CD14-positive monocyte (primary cell): ENCODE measurements at regions of chr3 and their contacts with region 1.

Region 1: DNA sequence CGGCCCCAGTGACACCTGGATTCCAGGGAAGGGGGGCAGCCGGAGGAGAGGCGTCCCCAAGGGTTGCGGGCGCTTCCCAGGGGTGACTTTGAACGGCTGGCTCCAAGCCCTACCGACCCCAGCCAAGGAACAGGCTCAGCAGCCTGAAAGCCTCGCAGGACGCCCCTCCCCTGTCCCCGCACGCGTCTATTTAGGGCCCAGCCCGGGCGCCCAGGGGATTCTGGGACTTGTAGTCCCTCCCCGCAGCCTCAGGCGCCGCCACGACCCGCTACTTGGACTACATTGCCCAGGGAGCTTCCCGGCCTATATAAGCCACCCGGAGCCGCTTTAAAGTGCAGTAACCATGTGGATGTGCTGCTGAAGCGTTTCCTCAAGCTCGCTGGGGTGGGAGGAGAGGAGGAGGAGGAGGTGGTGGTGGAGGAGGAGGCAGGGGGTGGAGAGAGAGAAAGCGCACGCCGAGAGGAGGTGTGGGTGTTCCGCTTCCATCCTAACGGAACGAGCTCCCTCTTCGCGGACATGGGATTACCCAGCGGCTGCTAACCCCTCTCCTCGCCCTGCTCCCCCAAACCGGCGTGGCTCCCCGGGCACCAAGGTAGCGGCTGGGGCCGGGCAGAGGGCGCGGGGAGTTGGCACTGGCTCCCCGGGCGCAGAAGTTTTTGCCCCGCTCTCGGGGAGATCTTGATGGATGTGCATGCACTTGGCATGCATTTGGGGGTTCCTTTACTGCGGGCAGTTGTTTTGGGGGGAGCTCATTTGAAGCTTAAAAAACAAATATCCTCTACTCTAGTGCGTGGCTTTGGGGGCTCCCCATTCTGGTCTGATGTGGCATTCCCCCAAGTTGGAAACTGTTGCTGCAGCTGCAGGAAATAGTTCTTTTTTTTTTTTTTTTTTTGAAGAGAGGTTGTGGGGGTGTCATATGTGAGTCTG is at the start of gene ITPR1:
- DNase-seq: peak; percentile 97 to 98 (median 98)
- H3K4me3 ChIP-seq: peak within 1 kb of the TSS; percentile 47 to 94 (median 67)
- H3K4me3 Mint-ChIP-seq: peak within 1 kb of the TSS; percentile 93 to 96
- H3K27ac ChIP-seq: peak within 1 kb of the TSS; percentile 45 to 82
- H3K27ac Mint-ChIP-seq: peak within 1 kb of the TSS; percentile 80 to 92 (median 89)
- H3K4me1 ChIP-seq: peaks cover 37 to 51% of the 10 kb centered on the region in 2 donors
- H3K4me1 Mint-ChIP-seq: peaks cover 51% of the 10 kb centered on the region
- H3K27me3 ChIP-seq: peaks cover 0 to 4% of the 10 kb centered on the region in 2 donors
- H3K27me3 Mint-ChIP-seq: peaks cover 3 to 5% (median 5%) of the 10 kb centered on the region in 3 donors
- CTCF ChIP-seq: no peak
- polyA plus RNA-seq, gene ITPR1: 3.2 to 21.1 (median 7.1) TPM

Region 2: DNA sequence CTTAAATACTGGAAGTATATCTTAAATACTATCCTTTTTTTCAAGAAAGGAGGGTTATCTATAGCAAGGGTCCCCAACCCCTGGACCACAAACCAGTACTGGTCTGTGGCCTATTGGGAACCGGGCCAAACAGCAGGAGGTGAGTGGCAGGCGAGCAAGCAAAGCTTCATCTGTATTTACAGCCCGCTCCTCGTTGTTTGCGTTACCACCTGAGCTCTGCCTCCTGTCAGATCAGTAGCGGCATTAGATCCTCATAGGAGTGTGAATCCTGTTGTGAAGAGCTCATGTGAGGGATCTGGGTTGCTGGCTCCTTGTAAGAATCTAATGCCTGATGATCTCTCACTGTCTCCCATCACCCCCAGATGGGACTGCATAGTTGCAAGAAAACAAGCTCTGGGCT is 52.3 kb before region 1 on chr3:
- intact Hi-C with region 1: no loop called
- DNase-seq: no peak
- H3K4me3 ChIP-seq: no peak overlapping the region
- H3K4me3 Mint-ChIP-seq: no peak overlapping the region
- H3K27ac ChIP-seq: no peak overlapping the region
- H3K27ac Mint-ChIP-seq: peak overlapping the region in 1 of 7 donors; percentile 3
- H3K4me1 ChIP-seq: no peaks in the 10 kb centered on the region
- H3K4me1 Mint-ChIP-seq: peaks cover 2% of the 10 kb centered on the region
- H3K27me3 ChIP-seq: no peaks in the 10 kb centered on the region
- H3K27me3 Mint-ChIP-seq: no peaks in the 10 kb centered on the region
- CTCF ChIP-seq: no peak

Region 3: DNA sequence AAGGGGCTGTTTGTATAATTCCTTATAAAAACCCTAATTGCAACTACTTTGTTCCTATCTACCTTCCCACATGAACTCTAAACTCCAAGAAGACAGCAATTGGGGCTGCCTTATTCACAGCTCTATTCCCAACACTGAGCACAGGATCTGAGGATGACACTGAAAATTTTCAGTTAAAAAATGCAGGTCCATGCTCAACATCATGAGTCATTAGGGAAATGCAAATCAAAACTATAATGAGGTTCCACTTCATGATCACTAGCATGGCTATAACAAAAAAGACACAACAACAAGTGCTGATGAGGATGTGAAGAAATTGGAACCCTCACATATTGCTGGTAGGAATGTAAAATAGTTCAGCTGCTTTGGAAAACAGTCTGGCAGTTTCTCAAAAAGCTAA is 39.1 kb before region 1 on chr3:
- intact Hi-C with region 1: loop called in 1 of 2 experiments (anchors 5 kb)
- DNase-seq: no peak
- H3K4me3 ChIP-seq: no peak overlapping the region
- H3K4me3 Mint-ChIP-seq: no peak overlapping the region
- H3K27ac ChIP-seq: peak overlapping the region in 1 of 2 donors; percentile 47
- H3K27ac Mint-ChIP-seq: peak overlapping the region in 1 of 7 donors; percentile 65
- H3K4me1 ChIP-seq: peaks cover 6 to 10% of the 10 kb centered on the region in 2 donors
- H3K4me1 Mint-ChIP-seq: peaks cover 16% of the 10 kb centered on the region
- H3K27me3 ChIP-seq: no peaks in the 10 kb centered on the region
- H3K27me3 Mint-ChIP-seq: no peaks in the 10 kb centered on the region
- CTCF ChIP-seq: no peak

Region 4: DNA sequence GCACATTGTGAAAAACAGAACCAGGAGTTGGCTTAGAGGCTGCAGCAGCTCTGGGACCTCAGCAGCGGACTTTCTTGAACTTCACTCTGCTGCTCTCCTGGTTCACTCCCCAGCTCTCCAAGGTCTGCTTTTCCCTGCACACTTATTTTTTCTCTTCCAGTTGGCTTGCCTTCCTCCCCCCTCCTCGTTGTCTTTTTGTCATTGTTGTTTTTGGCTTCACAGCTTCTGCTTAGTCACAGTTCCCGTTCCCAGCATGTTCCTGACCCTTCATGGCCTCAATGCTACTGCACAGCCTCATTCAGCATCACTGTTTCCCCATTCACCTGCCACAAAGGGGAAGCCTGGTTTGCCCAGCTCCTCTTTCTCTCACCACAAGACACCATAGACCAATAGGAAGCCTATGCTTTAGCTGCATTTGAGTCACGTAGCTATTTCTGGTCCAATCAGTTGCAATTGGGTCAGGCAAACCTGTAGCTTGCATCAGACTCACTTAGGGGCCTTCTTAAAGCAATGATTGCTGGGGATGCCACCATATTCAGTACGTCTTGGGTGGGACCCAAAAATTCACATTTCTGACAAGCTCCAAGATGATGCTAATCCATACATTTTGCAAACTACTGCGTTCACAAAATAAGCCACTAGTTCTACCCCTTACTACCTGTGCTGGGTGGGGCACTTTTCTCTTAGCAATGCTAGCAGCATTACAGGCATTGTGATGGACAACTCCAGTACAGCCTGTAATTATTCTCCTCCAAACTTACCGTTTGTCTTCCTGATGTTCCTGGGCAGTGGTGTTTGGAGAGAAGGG is 18.4 kb before region 1 on chr3:
- intact Hi-C with region 1: loop called (anchors 2 kb)
- DNase-seq: peak; percentile 90 to 97 (median 95)
- H3K4me3 ChIP-seq: peak overlapping the region; percentile 28 to 59 (median 39)
- H3K4me3 Mint-ChIP-seq: peak overlapping the region; percentile 64 to 80
- H3K27ac ChIP-seq: peak overlapping the region; percentile 80 to 88
- H3K27ac Mint-ChIP-seq: peak overlapping the region; percentile 91 to 99 (median 93)
- H3K4me1 ChIP-seq: peaks cover 54 to 58% of the 10 kb centered on the region in 2 donors
- H3K4me1 Mint-ChIP-seq: peaks cover 60% of the 10 kb centered on the region
- H3K27me3 ChIP-seq: no peaks in the 10 kb centered on the region
- H3K27me3 Mint-ChIP-seq: peaks cover 0 to 3% (median 0%) of the 10 kb centered on the region in 3 donors
- CTCF ChIP-seq: no peak

Region 5: GRCh38 chr3:4565806-4566501 is 72.7 kb after region 1 on chr3:
- intact Hi-C with region 1: no loop called
- DNase-seq: no peak
- H3K4me3 ChIP-seq: no peak overlapping the region
- H3K4me3 Mint-ChIP-seq: no peak overlapping the region
- H3K27ac ChIP-seq: no peak overlapping the region
- H3K27ac Mint-ChIP-seq: no peak overlapping the region
- H3K4me1 ChIP-seq: no peaks in the 10 kb centered on the region
- H3K4me1 Mint-ChIP-seq: peaks cover 4% of the 10 kb centered on the region
- H3K27me3 ChIP-seq: no peaks in the 10 kb centered on the region
- H3K27me3 Mint-ChIP-seq: no peaks in the 10 kb centered on the region
- CTCF ChIP-seq: no peak

Region 6: GRCh38 chr3:4986782-4987537 is 493.7 kb after region 1 on chr3:
- intact Hi-C with region 1: loop called in 1 of 2 experiments (anchors 10 kb)
- DNase-seq: peak; percentile 89 to 94 (median 92)
- H3K4me3 ChIP-seq: peak overlapping the region; percentile 43 to 71 (median 46)
- H3K4me3 Mint-ChIP-seq: peak overlapping the region; percentile 79 to 90
- H3K27ac ChIP-seq: peak overlapping the region; percentile 68 to 91
- H3K27ac Mint-ChIP-seq: peak overlapping the region; percentile 90 to 96 (median 95)
- H3K4me1 ChIP-seq: peaks cover 82 to 88% of the 10 kb centered on the region in 2 donors
- H3K4me1 Mint-ChIP-seq: peaks cover 80% of the 10 kb centered on the region
- H3K27me3 ChIP-seq: no peaks in the 10 kb centered on the region
- H3K27me3 Mint-ChIP-seq: peaks cover 0 to 7% (median 1%) of the 10 kb centered on the region in 3 donors
- CTCF ChIP-seq: no peak